Panc1 (cell line): ENCODE measurements at regions of chr19 and their contacts with region 1.

Region 1: GRCh38 chr19:43229315-43229714 is 23.9 kb upstream of the PSG4 start:
- DNase-seq: no peak
- ATAC-seq: peak; percentile 94
- H3K4me3 ChIP-seq: no peak overlapping the region
- H3K27ac ChIP-seq: no peak overlapping the region
- H3K4me1 ChIP-seq: no peaks in the 10 kb centered on the region; the same call in 1 of the 2 replicates
- H3K27me3 ChIP-seq: no peaks in the 10 kb centered on the region
- CTCF ChIP-seq: peak; percentile 34; the same call in 1 of the 2 replicates

Region 2: GRCh38 chr19:43101950-43102349 is 127.4 kb before region 1 on chr19:
- CTCF ChIA-PET with region 1: no interaction called
- POLR2A ChIA-PET with region 1: interaction called, 3 read pairs
- in situ Hi-C with region 1: no loop called
- intact Hi-C with region 1: loop called (anchors 10 kb)
- DNase-seq: no peak
- ATAC-seq: no peak
- H3K4me3 ChIP-seq: no peak overlapping the region
- H3K27ac ChIP-seq: no peak overlapping the region
- H3K4me1 ChIP-seq: no peaks in the 10 kb centered on the region
- H3K27me3 ChIP-seq: no peaks in the 10 kb centered on the region
- CTCF ChIP-seq: peak; percentile 51; the same call in 1 of the 2 replicates

Region 3: DNA sequence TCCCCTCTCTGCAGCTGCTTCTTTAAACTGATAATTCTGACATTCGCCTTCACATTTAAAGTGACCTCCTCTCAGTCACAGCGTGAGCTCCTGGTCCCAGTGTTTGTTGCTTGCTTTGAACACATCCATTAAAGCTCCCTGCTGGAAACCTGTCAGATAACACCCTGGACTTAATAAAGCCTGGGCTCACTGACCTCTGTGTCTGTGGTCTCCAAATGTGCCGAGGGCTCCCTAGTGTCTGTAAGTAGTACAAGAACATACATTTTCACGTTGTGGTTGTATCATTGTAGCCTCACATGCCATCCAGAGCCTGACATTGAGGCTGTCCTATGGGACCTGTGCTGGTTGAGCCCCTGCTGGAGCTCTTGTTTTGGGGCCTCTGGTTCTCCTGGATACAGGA is 21.3 kb before region 1 on chr19:
- CTCF ChIA-PET with region 1: no interaction called
- POLR2A ChIA-PET with region 1: no interaction called
- in situ Hi-C with region 1: no loop called
- intact Hi-C with region 1: no loop called
- DNase-seq: no peak
- ATAC-seq: no peak
- H3K4me3 ChIP-seq: no peak overlapping the region
- H3K27ac ChIP-seq: no peak overlapping the region
- H3K4me1 ChIP-seq: no peaks in the 10 kb centered on the region
- H3K27me3 ChIP-seq: no peaks in the 10 kb centered on the region
- CTCF ChIP-seq: no peak

Region 4: GRCh38 chr19:43265664-43266025 is 36.3 kb after region 1 on chr19:
- CTCF ChIA-PET with region 1: no interaction called
- POLR2A ChIA-PET with region 1: no interaction called
- in situ Hi-C with region 1: no loop called
- intact Hi-C with region 1: loop called (anchors 5 kb)
- DNase-seq: no peak
- ATAC-seq: no peak
- H3K4me3 ChIP-seq: no peak overlapping the region
- H3K27ac ChIP-seq: peak overlapping the region; percentile 59
- H3K4me1 ChIP-seq: peaks cover 4% of the 10 kb centered on the region; the same call in 1 of the 2 replicates
- H3K27me3 ChIP-seq: no peaks in the 10 kb centered on the region
- CTCF ChIP-seq: no peak